ENCODE measurements at regions of chr18 and their contacts with region 1.

Region 1: GRCh38 chr18:59085797-59086196 is 53.9 kb upstream of the SEC11C start:
- DNase-seq: no peak
- H3K4me3 ChIP-seq: no peak overlapping the region
- H3K27ac ChIP-seq: no peak overlapping the region
- H3K4me1 ChIP-seq: no peaks in the 10 kb centered on the region
- H3K27me3 ChIP-seq: no peaks in the 10 kb centered on the region
- CTCF ChIP-seq: no peak
- EP300 ChIP-seq: no peak
- POLR2A ChIP-seq: no peak
- RAD21 ChIP-seq: no peak

Region 2: DNA sequence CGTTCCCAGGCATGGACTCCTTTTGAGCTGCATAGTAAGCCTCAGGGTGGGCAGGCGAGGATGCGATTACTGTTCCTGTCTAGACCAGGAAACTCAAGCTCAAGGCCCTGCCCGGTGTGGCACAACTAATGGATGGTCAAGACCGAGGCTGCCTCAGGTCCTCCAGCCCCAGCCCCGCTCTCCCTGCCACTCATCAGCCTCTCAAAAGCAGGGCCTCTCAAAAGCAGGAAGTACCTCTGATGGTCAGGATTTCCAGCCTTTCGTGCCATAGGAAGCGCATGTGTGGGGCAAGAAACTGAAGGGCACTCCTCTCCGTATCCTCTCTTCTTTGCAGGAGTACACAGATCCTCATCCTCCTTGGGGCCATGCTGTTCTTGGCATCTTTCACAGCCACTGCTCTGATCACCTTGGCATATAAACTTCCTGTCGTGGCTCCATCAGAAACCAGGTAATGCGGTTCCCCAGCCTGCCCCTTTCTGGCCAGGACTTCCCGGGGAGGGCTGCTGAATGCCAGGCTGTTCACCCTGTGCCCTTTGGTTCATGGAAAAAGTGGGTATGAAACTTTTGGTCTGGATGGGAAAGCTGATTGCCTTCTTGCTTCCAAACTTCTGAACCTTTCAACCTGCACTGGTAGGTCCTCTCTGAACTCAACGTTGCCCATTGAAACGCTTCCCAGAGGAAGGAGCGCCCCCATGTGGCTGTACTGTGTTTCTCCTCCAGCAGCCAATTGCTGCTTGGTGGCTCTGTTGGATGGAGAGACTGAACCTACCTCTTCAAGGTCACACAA is 28.9 kb before region 1 on chr18:
- CTCF ChIA-PET with region 1: no interaction called
- POLR2A ChIA-PET with region 1: no interaction called
- DNase-seq: peak; percentile 46 to 92
- H3K4me3 ChIP-seq: no peak overlapping the region
- H3K27ac ChIP-seq: no peak overlapping the region
- H3K4me1 ChIP-seq: no peaks in the 10 kb centered on the region; a peak in 1 of 7 replicates
- H3K27me3 ChIP-seq: no peaks in the 10 kb centered on the region
- CTCF ChIP-seq: peak; percentile 83 to 98 (median 89)
- EP300 ChIP-seq: no peak
- POLR2A ChIP-seq: no peak
- RAD21 ChIP-seq: peak; percentile 98

Region 3: GRCh38 chr18:59070181-59070912 is 15.4 kb before region 1 on chr18:
- CTCF ChIA-PET with region 1: interaction called, 62 read pairs
- POLR2A ChIA-PET with region 1: no interaction called
- DNase-seq: peak; percentile 56 to 98
- H3K4me3 ChIP-seq: no peak overlapping the region
- H3K27ac ChIP-seq: no peak overlapping the region
- H3K4me1 ChIP-seq: no peaks in the 10 kb centered on the region
- H3K27me3 ChIP-seq: no peaks in the 10 kb centered on the region
- CTCF ChIP-seq: peak; percentile 72 to 96 (median 95)
- EP300 ChIP-seq: peak in 1 of 2 experiments; percentile 99; a peak in 1 of 3 replicates
- POLR2A ChIP-seq: no peak
- RAD21 ChIP-seq: peak; percentile 88 to 94

Region 4: GRCh38 chr18:59096098-59096789 is 10.4 kb after region 1 on chr18:
- CTCF ChIA-PET with region 1: interaction called, 13 read pairs
- POLR2A ChIA-PET with region 1: no interaction called
- DNase-seq: peak; percentile 38 to 70
- H3K4me3 ChIP-seq: no peak overlapping the region
- H3K27ac ChIP-seq: no peak overlapping the region
- H3K4me1 ChIP-seq: peaks cover 0 to 3% (median 1%) of the 10 kb centered on the region in 4 experiments; a peak in 4 of 7 replicates
- H3K27me3 ChIP-seq: peaks cover 0 to 2% (median 0%) of the 10 kb centered on the region in 4 experiments; a peak in 1 of 7 replicates
- CTCF ChIP-seq: peak; percentile 71 to 85 (median 75)
- EP300 ChIP-seq: no peak
- POLR2A ChIP-seq: no peak
- RAD21 ChIP-seq: peak; percentile 58 to 65

Region 5: DNA sequence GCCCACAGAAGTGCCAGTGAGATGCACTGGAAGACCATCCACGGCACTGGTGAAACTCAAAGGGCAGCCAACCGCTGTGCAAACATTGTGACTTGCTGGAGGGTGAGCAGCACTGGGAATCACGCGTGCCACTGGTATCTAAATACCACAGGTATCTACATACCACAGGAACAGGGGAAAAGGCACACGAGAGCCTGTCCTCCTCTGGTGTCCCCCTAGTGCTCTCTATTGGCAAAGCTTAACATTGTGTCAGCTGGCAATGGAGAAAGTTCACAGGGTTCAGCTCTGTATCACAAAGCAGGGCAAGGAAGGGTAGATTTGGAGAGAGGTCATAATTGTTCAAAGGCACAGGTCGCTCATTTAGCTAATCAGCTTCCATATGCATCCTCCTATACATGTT is 41.2 kb after region 1 on chr18:
- CTCF ChIA-PET with region 1: interaction called, 18 read pairs
- POLR2A ChIA-PET with region 1: no interaction called
- DNase-seq: no peak
- H3K4me3 ChIP-seq: no peak overlapping the region
- H3K27ac ChIP-seq: no peak overlapping the region
- H3K4me1 ChIP-seq: no peaks in the 10 kb centered on the region
- H3K27me3 ChIP-seq: no peaks in the 10 kb centered on the region
- CTCF ChIP-seq: peak; percentile 14 to 51 (median 35); a peak in 2 of 4 replicates
- EP300 ChIP-seq: no peak
- POLR2A ChIP-seq: no peak
- RAD21 ChIP-seq: peak; percentile 30 to 43; a peak in 2 of 4 replicates

Region 6: DNA sequence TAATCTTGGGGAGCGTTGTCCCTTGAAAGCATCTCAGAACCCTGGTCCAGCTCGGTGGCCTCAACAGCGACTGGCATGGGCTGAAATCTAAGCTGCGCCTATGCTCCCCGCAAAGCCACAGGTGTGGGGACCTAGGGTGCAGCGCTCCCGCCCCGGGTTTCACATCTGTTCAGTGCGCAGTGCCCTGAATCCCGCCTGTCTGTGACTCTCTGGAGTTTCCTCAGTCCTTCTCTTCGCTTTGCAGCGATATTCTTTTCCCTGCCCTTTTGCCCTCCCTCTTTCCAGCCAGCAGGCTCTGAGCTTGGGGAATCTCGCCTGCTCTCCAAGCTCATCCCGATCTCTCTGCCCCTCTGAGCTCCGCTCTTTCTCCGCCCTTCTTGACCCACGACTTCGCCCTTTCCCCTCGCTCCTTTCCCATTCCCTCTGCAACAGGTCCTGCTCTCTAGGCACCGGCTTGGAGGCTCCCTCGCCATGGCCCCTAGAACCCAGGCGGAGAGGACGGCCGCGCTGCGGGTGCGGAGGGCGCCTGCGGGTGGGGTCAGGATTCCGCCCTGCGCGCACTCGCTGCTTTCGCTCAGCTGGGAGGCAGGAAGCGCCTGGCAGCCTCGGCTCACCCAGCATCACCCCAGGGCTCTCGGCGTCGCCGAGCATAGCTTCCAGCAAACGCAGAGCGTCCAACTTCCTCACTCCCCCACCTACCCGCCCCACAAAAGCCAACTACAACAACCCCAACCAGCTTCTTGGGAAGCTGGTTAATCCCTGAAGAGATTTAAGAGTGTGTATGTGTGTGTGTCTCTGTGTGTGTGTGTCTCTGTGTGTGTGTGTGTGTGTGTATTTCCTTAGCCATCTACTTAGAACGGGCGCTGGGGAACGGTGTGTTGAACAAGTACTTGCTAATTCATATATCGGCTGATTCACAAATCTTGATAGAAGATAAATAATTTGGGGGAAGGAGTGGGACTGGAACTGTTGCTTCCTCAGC is 135.3 kb after region 1 on chr18:
- CTCF ChIA-PET with region 1: interaction called, 12 read pairs
- POLR2A ChIA-PET with region 1: no interaction called
- DNase-seq: peak in 1 of 2 experiments; percentile 70
- H3K4me3 ChIP-seq: peak overlapping the region; percentile 45 to 71 (median 56)
- H3K27ac ChIP-seq: no peak overlapping the region
- H3K4me1 ChIP-seq: peaks cover 0 to 14% (median 7%) of the 10 kb centered on the region in 4 experiments; a peak in 5 of 7 replicates
- H3K27me3 ChIP-seq: peaks cover 46 to 66% (median 57%) of the 10 kb centered on the region in 4 experiments
- CTCF ChIP-seq: no peak
- EP300 ChIP-seq: no peak
- POLR2A ChIP-seq: no peak
- RAD21 ChIP-seq: no peak